Ovary (tissue), 10 donors: ENCODE measurements at regions of chr15 and their contacts with region 1.

Region 1: DNA sequence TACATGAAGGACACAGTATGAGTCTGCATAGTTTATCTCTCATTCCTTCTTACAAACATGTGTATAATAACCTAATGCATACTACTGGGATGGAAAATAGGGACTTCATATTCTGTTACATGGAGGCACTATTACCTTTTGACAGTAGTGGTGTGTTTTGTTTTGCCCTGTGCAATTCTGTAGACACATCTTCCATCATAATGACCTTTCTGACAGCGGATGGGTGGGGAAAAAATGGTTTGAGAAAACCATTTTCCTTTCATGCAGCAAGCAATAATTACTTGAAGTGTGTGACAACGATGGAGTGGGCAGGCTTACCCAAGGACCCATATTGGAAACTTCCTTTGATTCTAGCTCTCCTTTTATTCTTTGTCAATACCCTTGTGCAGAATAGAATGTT is 153.6 kb upstream of the ONECUT1 start:
- DNase-seq: no peak
- H3K4me3 ChIP-seq: no peak overlapping the region
- H3K27ac ChIP-seq: no peak overlapping the region
- H3K4me1 ChIP-seq: no peaks in the 10 kb centered on the region
- H3K27me3 ChIP-seq: no peaks in the 10 kb centered on the region
- CTCF ChIP-seq: no peak
- EP300 ChIP-seq: no peak
- POLR2A ChIP-seq: no peak

Region 2: GRCh38 chr15:52759969-52760368 is 183.8 kb before region 1 on chr15:
- intact Hi-C with region 1: no loop called
- DNase-seq: no peak
- H3K4me3 ChIP-seq: no peak overlapping the region
- H3K27ac ChIP-seq: no peak overlapping the region
- H3K4me1 ChIP-seq: no peaks in the 10 kb centered on the region
- H3K27me3 ChIP-seq: no peaks in the 10 kb centered on the region
- CTCF ChIP-seq: no peak
- EP300 ChIP-seq: no peak
- POLR2A ChIP-seq: no peak

Region 3: DNA sequence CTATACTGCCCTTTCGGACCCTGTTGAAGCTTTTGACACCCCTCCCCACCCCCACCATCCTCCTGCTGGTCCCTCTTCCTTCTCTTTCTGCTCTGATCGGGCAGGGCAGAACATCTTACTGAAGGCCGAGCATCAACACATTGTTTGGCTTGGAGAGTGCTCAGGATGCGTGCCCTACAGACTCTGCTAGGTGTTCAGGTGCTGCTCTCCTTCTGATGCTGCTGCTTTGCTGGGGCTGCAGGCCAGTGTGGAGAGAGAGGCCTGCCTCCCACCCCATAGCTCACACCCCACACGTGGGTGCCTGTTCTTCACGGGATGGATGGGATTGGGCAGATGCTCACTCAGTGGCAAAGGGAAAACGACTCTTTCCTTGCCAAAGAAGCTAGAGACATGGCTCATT is 63.8 kb before region 1 on chr15:
- intact Hi-C with region 1: loop called in 1 of 4 experiments (anchors 10 kb)
- DNase-seq: no peak
- H3K4me3 ChIP-seq: no peak overlapping the region
- H3K27ac ChIP-seq: no peak overlapping the region
- H3K4me1 ChIP-seq: no peaks in the 10 kb centered on the region
- H3K27me3 ChIP-seq: no peaks in the 10 kb centered on the region
- CTCF ChIP-seq: no peak
- EP300 ChIP-seq: no peak
- POLR2A ChIP-seq: no peak